Left ventricle myocardium inferior (tissue), 1 donor: ENCODE measurements at regions of chr10 and their contacts with region 1.

Region 1: DNA sequence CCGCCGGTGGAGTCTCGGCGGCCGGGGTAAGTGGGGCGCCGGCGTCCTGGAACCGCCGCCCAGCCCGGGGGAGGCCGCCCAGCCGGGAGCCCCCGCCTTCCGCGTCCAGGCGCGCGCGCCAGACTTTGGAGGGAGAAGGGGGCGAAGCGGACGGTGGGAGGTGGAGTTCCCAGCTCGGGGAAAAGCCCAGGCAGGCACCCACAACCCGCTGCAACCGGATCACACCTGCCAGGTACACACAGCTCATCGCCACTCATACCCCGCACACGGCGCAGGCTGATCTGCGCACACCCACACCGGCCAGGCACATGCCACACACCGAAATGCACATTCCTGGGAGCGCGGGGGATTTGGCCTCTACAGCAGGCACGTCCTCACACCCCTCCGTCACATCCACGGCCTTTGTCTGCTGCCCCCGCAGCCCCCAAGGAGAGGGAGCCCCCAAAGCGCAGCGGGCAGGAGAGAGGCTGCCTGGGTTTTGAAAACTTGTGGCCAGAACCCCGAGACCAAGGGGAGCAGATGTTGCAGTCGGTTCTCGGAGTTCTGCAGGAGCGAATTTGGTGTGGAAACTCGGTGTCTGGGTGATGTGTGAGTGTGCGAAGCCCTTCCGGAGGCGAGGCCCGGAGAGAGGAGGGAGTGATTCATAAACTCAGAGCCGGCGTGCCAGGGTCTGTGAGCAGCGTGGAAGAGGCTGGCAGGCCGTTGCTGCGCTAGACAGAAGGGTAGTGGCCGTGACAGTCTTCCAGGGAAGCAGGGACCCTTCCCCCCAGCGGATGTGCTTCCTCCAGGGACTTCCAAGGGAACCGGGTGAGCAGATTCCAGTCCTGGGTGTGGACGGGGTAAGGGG is 697 bp downstream of the CHST3 start:
- DNase-seq: peak; percentile 65
- H3K4me3 ChIP-seq: peak overlapping the region; percentile 94
- H3K27ac ChIP-seq: peak overlapping the region; percentile 100
- H3K4me1 ChIP-seq: peaks cover 72% of the 10 kb centered on the region
- H3K27me3 ChIP-seq: no peaks in the 10 kb centered on the region
- CTCF ChIP-seq: no peak

Region 2: DNA sequence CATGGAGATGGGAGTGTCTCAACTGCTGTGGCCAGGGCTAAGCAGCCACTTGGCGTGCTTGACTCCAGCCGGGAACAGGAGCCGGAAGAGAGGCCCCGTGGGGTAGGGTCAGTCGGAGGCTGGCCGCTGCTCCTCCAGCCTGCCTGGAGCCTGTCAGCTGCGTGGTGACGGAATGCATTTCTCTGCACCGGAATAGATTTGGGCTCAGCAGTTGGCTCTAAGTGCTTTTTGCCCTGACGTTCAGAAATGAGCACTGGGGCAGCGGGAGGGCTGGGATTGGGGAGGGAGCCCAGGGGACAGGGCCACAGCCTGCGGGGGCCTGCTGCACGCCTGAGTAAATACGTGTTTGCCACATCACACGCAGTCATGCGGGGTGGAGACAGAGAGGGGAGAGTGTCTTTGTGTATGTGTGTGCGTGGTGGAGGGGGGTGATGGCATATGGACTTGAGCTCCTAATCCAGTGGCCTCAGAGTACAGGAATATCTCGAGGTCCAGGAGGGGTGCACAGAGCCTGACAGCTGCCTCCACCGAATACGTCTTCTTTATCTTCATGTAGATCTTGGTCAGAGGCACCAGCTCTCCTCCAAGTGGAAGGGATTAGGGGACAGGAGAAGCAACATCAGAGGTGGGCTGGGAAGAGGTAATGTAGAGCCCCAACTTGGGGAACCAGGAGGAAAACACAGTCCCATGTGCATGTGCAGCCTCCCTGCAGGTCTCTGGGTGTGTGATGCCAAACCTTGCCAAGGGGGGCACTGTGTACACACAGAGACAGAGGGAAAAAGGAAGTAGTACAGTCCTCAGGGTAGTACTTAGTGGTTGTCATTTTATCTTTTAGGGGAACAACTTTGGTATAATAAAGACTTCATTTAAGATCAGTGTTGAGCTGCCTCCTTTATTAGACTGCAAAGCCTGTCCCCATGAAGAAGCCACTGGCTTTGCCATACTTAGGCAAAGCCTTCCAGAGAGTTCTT is 416.7 kb before region 1 on chr10:
- intact Hi-C with region 1: no loop called
- DNase-seq: peak; percentile 75
- H3K4me3 ChIP-seq: peak overlapping the region; percentile 37
- H3K27ac ChIP-seq: peak overlapping the region; percentile 88
- H3K4me1 ChIP-seq: peaks cover 21% of the 10 kb centered on the region
- H3K27me3 ChIP-seq: no peaks in the 10 kb centered on the region
- CTCF ChIP-seq: peak; percentile 39

Region 3: GRCh38 chr10:71999360-72000072 is 34.6 kb after region 1 on chr10:
- intact Hi-C with region 1: loop called (anchors 5 kb)
- DNase-seq: peak; percentile 85
- H3K4me3 ChIP-seq: peak overlapping the region; percentile 29
- H3K27ac ChIP-seq: peak overlapping the region; percentile 89
- H3K4me1 ChIP-seq: peaks cover 78% of the 10 kb centered on the region
- H3K27me3 ChIP-seq: no peaks in the 10 kb centered on the region
- CTCF ChIP-seq: no peak